HEK293 (cell line): ENCODE measurements at regions of chr1 and their contacts with region 1.

Region 1: DNA sequence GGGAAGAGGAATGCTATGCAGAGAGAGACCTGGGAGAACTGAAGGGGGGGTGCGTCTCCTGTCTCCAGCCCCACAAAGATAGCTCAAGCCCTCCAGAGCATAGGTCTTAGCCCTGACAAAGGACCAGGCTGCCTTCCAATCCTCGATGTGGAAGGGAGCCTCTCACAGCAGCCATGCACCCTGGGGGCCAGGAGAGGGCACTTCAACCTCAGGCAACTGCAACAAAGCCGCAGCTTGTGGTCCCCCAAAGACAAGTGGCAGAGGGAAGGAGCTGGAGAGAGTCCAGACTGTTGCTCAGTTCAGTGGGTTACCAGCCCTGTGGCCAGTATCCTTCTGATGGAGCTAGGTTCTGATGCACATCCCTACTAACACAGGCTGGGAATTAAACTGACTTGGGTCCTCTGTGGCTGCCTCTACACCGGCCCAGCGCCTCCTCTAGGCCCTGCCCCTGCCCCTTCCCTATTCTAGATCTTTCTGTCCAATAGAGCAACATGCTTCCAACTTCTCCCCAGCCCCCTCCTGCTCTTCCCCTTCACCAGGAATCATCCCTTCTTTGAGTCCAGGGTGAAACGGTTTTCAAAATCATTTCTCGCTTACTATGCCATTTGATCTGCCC is 100.8 kb upstream of the SPATA6 start:
- H3K4me3 ChIP-seq: no peak overlapping the region
- H3K27ac ChIP-seq: no peak overlapping the region
- H3K4me1 ChIP-seq: no peaks in the 10 kb centered on the region
- CTCF ChIP-seq: peak; percentile 85

Region 2: DNA sequence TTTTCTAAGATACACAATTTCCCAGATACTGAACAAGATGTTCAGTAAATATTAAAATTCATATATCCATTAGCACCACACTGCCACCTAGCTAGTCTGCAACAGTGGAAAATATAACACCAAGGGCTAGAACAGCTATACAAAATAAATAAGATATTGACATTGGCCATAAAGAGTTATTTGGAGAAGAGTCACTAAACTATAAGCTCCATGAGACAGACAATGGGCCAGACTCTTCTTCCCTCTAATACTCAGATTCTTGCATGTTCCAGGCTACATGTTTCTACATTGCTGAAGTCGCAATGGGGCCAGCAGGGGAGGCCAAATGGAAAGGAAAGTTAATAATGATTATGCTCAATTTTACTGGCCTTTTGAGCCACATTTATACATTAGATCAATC is 122.2 kb before region 1 on chr1:
- CTCF ChIA-PET with region 1: no interaction called
- POLR2A ChIA-PET with region 1: no interaction called
- H3K4me3 ChIP-seq: no peak overlapping the region
- H3K27ac ChIP-seq: no peak overlapping the region
- H3K4me1 ChIP-seq: no peaks in the 10 kb centered on the region
- CTCF ChIP-seq: no peak

Region 3: DNA sequence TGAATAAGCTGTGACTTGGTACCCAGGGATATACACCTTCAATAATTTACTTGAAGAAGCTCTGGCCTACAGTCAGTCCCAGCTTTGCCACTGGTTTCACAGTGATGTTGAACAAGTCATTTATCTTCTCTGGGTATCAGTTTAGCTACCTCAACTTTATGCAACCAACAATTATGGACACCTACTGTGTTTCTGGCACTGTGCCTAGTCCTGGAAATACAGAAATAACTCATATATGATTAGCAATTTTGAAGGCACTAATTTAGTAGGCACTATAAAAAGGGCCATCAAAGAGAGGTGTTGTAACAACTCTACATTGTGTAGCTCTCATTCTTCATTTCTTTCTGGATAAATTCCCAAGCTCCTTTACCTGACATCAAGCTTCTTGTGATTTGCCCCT is 12.2 kb before region 1 on chr1:
- CTCF ChIA-PET with region 1: interaction called, 17 read pairs
- POLR2A ChIA-PET with region 1: no interaction called
- H3K4me3 ChIP-seq: no peak overlapping the region
- H3K27ac ChIP-seq: no peak overlapping the region
- H3K4me1 ChIP-seq: no peaks in the 10 kb centered on the region
- CTCF ChIP-seq: no peak

Region 4: DNA sequence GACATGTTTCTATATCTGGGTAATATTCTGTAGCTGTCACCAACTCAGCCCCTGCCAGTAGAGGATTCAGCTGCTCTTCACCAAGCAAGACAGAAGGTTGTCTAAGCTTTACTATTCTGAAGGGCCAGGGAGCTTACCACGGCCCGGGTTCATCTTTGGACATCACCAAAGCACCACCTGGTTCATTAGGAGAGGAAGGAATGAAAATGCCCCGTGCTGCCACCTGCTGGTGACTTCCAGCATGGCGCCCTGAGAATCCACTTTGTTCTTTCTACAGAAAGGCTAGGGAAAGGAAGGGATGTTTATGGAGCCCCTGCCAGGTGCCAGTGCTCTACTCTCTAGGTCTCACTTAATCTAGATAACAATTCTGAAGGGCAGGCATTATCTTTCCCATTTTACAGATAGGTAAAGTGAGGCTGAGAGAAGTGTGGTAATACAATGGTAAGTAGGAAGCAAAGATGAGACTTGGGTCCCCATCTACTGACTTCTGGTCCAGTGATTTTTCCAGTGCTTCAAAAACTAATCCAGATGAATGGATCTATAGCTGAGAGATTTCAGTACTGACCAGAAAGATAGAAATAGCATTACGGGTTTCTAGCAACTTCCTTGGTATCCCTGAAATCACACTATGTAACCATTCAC is 124.4 kb after region 1 on chr1:
- CTCF ChIA-PET with region 1: interaction called, 39 read pairs
- POLR2A ChIA-PET with region 1: no interaction called
- H3K4me3 ChIP-seq: no peak overlapping the region
- H3K27ac ChIP-seq: no peak overlapping the region
- H3K4me1 ChIP-seq: no peaks in the 10 kb centered on the region
- CTCF ChIP-seq: peak; percentile 41; the same call in 1 of the 2 replicates

Region 5: GRCh38 chr1:48761986-48762385 is 189.2 kb after region 1 on chr1:
- CTCF ChIA-PET with region 1: no interaction called
- POLR2A ChIA-PET with region 1: no interaction called
- H3K4me3 ChIP-seq: no peak overlapping the region
- H3K27ac ChIP-seq: no peak overlapping the region
- H3K4me1 ChIP-seq: no peaks in the 10 kb centered on the region
- CTCF ChIP-seq: no peak

Region 6: DNA sequence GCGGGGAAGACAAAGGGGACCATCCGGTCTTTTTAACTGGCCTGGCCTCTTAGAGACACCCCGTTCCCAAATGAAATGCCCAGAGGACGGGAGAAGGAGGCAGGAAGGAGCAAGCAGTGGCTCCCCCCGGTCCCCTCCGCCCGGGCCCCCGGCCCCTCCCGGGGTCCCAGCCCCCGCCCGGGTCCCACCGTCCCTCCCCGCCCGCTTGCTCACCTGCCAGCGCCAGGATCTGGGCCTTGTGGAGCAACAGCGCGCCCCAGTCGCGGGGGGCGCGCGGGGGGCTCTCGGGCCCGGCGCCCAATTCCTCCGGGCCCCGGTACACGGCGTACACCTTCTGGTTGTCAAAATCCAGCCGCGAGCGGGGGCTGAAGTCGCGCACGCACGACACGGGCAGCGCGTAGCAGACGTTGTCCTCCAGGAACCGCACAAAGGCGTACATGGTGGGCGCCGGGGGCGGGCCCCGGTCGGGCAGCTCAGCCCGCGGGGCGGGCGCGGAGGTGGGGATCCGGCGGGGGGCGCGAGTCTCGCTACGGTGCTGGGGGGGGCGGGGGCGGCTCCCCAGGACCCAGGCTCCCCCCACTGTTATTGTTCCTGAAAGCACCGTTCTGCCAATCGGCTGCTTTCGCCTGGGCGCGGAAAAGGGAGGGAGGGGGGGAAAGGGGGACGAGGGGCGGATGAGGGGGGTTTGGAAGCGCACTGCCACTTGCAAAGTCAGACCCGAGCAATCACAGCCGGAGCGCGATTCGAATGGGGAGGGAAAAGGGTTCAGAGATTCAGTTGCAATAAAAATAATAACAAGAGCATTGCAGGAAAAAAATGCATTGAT is 203.9 kb after region 1 on chr1 and contains the start of gene BEND5:
- CTCF ChIA-PET with region 1: no interaction called
- POLR2A ChIA-PET with region 1: no interaction called
- H3K4me3 ChIP-seq: peak within 1 kb of the TSS; percentile 63
- H3K27ac ChIP-seq: no peak within 1 kb of the TSS
- H3K4me1 ChIP-seq: no peaks in the 10 kb centered on the region
- CTCF ChIP-seq: no peak

Region 7: DNA sequence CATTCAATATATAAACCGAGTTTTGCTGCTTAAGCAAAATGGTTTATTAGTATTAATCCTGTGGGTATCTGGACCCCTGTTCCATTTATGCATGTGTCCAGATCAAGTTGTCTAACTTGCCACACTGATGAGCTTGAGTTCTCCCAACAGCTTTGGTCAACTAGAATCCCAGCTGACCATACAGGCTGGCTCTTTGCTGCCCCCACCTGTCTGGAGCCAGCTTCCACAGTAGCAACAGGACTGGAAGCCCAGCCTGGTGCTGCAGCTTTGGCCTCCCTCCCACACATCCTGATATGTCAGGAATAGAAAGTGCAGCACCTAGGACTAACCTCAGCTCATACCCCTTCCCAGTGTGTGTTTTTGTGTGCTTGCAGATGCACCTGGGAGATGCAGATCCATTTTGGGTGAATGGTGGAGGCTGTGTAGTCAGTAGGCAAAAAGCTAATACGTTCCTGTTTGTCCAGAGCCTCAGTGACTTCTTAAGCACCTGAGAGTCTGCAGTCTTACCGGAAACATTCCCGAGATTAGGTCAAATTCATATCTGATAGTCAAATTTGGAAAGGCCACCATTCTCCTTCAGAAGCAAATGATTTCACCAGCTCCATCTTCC is 244.9 kb after region 1 on chr1:
- CTCF ChIA-PET with region 1: interaction called, 33 read pairs
- POLR2A ChIA-PET with region 1: no interaction called
- H3K4me3 ChIP-seq: no peak overlapping the region
- H3K27ac ChIP-seq: no peak overlapping the region
- H3K4me1 ChIP-seq: no peaks in the 10 kb centered on the region
- CTCF ChIP-seq: peak; percentile 55; the same call in 1 of the 2 replicates

Region 8: GRCh38 chr1:48870596-48870995 is 297.8 kb after region 1 on chr1:
- CTCF ChIA-PET with region 1: interaction called, 18 read pairs
- POLR2A ChIA-PET with region 1: no interaction called
- H3K4me3 ChIP-seq: no peak overlapping the region
- H3K27ac ChIP-seq: no peak overlapping the region
- H3K4me1 ChIP-seq: no peaks in the 10 kb centered on the region
- CTCF ChIP-seq: peak; percentile 59; the same call in 1 of the 2 replicates